Head of caudate nucleus (tissue), 42 donors: ENCODE measurements at regions of chr5 and their contacts with region 1.

Region 1: DNA sequence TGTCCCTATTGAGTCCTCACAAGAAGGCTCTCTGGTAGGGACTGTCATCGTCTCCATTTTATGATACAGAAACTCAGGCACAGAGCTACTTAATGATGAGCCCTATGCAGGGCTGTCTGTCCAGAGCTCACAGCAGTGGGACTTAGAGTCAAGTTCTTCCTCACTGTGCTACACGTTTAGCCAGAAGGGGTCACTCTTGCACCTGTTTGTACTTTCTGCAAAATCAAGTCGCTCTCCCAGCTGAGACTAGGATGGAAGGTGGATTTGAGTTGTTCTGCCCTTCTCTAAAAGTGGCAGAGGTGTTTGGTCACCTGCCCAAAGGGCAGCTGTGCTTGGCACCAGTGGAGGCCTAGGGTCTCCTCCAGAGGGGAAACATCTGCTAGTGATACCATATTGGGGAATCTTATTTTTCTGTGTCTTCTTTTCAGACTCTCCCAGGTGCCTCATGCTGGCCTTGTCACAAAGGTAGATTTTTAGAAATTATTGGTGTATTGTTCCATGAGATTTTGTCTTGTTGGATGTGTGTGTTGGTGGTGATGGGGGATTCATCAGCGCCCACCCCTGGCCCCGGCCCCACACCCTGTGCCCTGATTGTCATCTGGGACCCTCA is 104.2 kb downstream of the PPARGC1B start:
- DNase-seq: peak in 35 of 42 donors; percentile 12 to 82 (median 60)

Region 2: GRCh38 chr5:149796030-149796429 is 38.3 kb before region 1 on chr5:
- intact Hi-C with region 1: no loop called
- DNase-seq: no peak

Region 3: DNA sequence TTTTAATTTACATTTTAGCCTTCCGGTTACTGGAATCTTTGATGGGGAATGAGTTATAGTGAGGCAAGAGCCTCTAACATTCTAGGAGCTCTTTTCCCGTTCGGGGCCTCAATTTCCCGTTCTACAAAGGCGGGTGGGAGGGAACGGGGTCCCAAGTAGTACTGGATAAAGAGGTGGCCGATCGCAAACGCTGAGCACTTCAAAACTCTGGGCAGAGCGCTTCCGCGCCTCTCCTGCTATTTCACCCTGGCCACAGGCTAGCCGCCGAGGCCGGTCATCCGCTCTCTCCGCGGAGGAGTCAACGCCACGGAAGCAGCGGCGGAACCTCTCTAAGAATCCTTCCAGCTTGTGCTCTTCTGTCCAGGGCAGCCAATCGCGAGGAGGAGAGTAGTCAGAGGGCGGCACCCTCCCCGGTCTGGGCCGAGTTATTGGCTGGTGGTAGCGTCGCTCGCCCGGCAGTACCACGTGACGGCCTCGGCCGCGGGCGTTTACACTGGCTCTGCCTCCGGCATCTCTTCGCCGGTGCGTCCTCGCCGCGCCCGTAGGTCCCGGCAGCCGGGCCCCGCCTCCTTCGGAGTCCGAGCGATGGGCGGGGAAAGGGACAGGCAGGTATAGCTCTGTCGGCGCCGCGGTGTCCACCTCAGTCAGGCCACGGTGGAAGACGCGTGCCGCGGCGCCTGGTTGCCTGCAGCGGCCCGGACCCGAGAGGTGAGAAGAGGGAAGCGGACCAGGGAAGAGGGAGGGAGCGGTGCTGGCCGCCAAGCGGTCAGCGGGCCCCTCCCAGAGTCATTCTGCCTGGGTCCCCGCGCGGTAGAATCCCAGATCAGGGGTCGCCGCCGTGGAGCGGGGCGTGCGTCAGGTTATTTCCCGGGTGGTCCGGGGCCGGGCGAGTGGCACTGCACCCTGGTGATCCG is 126.2 kb after region 1 on chr5 and contains the start of gene SLC26A2:
- intact Hi-C with region 1: loop called (anchors 10 kb)
- DNase-seq: peak; percentile 94 to 100 (median 99)

Region 4: DNA sequence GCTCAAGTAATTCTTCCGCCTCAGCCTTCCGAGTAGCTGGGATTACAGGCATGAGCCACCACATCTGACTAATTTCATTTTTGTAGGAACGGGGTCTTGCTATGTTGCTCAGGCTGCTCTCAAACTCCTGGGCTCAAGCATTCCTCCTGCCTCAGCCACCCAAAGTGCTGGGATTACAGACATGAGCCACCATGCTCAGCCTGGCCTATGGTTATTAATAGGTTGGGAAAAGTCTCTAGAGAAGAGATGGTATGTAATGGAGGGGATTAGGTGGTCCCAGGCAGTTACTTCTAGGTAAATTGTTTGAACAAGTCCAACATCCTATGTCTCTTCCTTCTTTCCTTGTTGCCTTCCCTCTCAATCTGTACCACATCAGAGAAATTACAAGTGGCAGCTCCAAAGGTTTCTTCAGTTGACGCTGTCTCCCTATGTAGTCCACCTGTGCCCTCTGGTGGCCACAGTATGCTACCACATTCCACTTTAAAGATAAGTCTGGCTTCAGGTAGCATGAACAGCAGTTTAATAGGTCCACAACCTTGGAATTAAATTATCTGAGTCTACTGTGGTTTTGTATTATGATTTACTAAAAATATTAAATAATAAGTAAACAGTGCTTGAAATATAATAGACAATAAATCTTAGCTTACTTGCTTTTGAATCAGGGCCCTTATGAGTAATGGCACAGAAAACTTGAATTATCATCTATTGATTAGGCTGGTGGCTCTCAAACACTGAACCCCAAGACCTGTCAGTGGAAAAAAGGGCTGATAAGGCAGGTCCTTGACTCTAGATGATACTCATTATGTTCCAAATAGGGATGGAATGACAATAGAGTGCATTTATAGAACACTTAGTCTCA is 156.4 kb after region 1 on chr5:
- intact Hi-C with region 1: loop called (anchors 5 kb)
- DNase-seq: peak; percentile 24 to 90 (median 75)

Region 5: DNA sequence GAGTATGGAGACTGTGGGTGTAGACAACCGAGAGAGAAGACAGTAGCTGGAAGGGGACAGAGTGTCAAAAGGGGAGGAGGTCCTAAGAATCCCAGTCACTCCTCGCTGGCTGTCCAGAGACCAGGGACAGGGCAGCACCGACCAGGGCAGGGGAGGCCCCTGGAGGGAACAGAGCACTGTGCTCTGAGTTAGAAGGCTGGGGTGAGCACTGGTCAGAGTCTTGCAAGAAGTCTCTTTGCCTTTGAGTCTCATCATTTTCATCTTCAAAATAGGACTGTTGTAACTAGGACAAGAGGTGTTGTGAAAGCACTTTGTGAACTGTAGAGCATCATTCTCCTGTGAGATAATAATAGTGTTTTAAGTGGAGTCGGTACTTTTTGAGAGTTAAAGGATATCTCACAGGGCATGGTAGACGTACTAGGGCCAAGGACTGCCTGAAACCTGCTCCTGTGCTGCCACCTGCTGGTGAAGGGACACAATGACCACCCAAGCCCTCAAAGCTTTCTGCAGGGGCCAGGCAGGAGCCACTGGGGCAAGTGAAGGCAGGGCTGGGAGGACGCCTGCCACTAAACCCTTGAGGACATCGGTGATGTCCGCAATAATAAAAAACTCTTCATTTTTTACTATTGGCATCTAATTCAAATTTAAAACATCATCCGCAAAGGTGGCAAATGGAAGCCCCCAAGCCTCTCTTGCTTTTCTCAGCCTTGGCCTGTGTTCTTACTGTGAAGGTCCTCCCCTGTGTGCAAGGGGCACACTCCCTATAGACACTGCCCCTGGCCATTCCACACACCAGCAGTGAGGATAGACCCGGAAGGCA is 383.7 kb after region 1 on chr5:
- intact Hi-C with region 1: loop called (anchors 10 kb)
- DNase-seq: peak; percentile 67 to 93 (median 87)